Sigmoid colon (tissue), 7 donors: ENCODE measurements at regions of chr4 and their contacts with region 1.

Region 1: DNA sequence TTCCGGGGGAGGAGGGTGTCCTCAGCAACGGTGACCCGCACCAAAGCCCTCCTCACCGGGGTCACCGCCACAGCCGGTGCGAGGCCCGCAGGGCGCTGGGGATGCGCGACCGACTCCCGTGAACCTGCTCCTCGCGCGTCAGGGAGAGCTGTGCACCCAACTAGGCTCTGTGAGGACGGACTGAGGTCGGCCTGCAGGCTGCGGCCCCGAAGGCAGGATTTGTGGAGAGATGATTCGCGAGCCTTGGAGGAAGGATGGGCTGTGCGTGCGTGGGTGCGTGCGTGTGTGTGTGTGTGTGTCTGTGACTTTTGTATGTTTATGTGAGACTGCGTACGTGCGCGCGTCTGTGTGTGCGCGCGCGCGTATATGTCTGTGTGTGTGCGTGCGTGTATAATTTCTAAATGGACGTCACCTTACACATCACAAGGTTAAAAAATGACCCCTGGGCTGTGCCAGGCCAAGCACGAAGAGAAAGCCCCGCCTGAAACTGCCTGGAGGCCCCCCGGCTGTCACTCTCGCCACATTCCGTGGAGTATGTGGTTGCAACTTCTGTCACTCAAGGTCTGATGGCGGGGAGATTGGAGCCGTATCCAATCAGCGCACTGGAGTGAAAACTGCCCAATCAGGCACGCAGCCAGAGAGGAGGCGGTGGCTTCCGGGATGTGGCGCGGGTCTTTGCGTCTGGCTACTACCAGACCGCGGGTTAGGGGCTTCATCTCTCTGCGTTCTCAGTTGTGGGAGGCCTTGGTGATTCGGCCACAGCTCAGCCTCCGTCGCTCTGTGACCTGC is at the start of gene ZNF141:
- DNase-seq: peak; percentile 99
- H3K4me3 ChIP-seq: peak within 1 kb of the TSS; percentile 77 to 97 (median 90)
- H3K27ac ChIP-seq: peak within 1 kb of the TSS; percentile 88 to 99 (median 98)
- H3K4me1 ChIP-seq: peaks cover 0 to 28% (median 18%) of the 10 kb centered on the region in 4 donors
- H3K27me3 ChIP-seq: no peaks in the 10 kb centered on the region
- CTCF ChIP-seq: no peak
- EP300 ChIP-seq: peak in 3 of 4 donors; percentile 75 to 82 (median 76)
- POLR2A ChIP-seq: peak; percentile 69 to 89
- total RNA-seq, gene ZNF141: 17.4 to 24.4 (median 23.2) TPM

Region 2: DNA sequence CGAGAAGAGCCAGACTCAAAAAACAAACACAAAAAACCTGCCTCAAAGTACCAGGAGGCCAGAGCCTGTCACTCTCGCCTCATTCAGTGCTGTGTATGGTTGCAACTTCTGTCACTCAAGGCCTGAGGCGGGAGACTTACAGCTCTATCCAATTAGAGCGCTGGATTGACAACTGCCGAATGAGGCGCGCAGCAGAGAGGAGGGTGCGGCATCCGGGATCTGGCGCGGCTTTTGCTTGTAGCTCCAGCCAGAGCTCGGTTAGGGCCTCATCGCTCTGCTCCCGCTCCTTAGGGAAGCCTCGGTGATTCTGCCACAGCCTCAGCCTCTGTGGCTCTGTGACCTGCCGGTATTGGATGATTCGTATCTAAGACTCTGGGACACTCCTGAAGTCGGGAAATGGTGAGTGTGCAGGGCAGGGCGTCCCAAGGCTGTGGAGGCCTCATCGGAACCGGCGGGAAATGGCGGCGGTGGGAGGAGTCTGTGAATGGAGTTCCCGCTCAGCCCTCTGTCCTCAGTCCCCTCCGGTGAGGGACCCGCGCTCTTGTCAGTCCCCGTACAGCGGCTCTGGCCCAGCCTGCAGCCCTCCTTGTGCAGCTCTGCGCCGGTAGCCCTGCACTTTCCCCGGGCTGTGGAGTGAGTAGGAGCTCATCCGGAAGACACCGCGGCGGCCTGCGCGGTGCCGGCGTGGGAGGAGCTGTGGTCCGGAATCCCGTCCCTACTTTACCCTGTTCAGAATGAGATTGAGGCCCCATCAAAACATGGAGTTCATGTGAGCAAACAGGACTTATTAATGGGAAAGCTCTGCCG is 212.9 kb before region 1 on chr4 and contains the start of gene ZNF718:
- intact Hi-C with region 1: loop called (anchors 5 kb)
- DNase-seq: peak; percentile 97
- H3K4me3 ChIP-seq: peak within 1 kb of the TSS; percentile 71 to 85 (median 81)
- H3K27ac ChIP-seq: peak within 1 kb of the TSS; percentile 88 to 90 (median 89)
- H3K4me1 ChIP-seq: peaks cover 0 to 13% (median 11%) of the 10 kb centered on the region in 4 donors
- H3K27me3 ChIP-seq: no peaks in the 10 kb centered on the region
- CTCF ChIP-seq: no peak
- EP300 ChIP-seq: no peak
- POLR2A ChIP-seq: peak; percentile 68 to 72
- total RNA-seq, gene ZNF718: 7.7 to 13.2 (median 8.6) TPM

Region 3: DNA sequence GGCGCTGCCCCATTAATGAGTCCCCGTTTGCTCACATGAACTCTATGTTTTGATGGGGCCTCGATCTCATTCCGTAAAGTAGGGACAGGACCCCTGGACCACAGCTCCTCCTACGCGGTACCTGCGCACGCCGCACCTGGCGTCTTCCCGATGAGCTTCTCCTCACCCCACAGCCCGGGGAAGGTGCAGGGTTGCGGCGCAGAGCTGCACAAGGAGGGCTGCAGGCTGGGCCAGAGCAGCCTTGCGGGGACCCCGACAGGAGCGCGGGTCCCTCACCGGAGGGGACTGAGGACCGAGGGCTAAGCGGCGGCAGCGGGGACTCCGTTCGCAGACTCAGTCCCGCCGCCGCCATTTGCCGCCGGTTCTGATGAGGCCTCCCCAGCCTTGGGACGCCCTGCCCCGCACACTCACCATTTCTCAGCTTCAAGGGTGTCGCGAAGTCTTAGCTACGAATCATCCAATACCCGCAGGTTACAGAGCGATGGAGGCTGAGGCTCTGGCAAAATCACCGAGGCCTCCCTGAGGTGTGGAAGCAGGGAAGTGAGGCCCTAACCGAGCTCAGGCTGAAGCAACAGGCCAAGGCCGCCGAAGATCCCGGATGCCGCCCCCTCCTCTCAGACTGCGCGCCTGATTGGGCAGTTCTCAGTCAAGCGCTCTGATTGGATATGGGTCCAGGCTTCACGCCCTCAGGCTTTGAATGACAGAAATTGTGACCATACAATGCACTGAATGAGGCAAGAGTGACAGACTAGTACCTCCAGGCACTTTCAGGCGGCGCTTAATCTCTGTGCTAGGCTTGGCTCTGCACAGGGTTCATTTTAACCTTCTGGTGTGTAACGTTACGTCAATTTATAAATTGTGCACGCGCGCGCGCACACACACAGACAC is 136.5 kb after region 1 on chr4:
- intact Hi-C with region 1: loop called (anchors 5 kb)
- DNase-seq: peak; percentile 98
- H3K4me3 ChIP-seq: peak overlapping the region; percentile 77 to 99 (median 92)
- H3K27ac ChIP-seq: peak overlapping the region; percentile 86 to 92 (median 90)
- H3K4me1 ChIP-seq: peaks cover 0 to 25% (median 17%) of the 10 kb centered on the region in 4 donors
- H3K27me3 ChIP-seq: no peaks in the 10 kb centered on the region
- CTCF ChIP-seq: no peak
- EP300 ChIP-seq: no peak
- POLR2A ChIP-seq: peak; percentile 56 to 63

Region 4: DNA sequence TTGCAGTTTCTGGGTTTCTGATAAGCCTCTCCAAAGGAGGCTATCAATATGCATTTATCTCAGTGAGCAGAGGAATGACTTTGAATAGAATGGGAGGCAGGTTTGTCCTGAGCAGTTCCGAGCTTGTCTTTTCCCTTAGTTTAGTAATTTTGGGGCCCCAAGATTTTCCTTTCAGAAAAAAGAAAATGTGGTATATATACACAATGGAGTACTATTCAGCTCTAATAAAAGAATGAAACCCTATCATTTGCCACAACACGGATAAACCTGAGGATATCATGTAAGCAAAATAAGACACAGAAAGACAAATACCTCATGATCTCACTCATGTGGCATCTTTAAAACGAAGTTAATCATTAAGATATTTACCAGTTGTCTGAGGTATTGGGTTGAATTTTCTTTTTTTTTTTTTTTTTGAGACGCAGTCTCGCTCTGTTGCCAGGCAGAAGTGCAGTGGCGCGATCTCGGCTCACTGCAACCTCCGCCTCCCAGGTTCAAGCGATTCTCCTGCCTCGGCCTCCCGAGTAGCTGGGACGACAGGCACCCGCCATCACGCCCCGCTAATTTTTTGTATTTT is 161.1 kb after region 1 on chr4:
- intact Hi-C with region 1: loop called (anchors 5 kb)
- DNase-seq: no peak
- H3K4me3 ChIP-seq: peak overlapping the region; percentile 79 to 94 (median 86)
- H3K27ac ChIP-seq: peak overlapping the region; percentile 83 to 90 (median 88)
- H3K4me1 ChIP-seq: peaks cover 0 to 40% (median 23%) of the 10 kb centered on the region in 4 donors
- H3K27me3 ChIP-seq: no peaks in the 10 kb centered on the region
- CTCF ChIP-seq: no peak
- EP300 ChIP-seq: no peak
- POLR2A ChIP-seq: no peak

Region 5: GRCh38 chr4:548976-549375 is 211.6 kb after region 1 on chr4:
- intact Hi-C with region 1: no loop called
- DNase-seq: no peak
- H3K4me3 ChIP-seq: no peak overlapping the region
- H3K27ac ChIP-seq: no peak overlapping the region
- H3K4me1 ChIP-seq: no peaks in the 10 kb centered on the region
- H3K27me3 ChIP-seq: no peaks in the 10 kb centered on the region
- CTCF ChIP-seq: no peak
- EP300 ChIP-seq: no peak
- POLR2A ChIP-seq: no peak